Cardiac septum (tissue), 1 donor: ENCODE measurements at regions of chr3 and their contacts with region 1.

Region 1: DNA sequence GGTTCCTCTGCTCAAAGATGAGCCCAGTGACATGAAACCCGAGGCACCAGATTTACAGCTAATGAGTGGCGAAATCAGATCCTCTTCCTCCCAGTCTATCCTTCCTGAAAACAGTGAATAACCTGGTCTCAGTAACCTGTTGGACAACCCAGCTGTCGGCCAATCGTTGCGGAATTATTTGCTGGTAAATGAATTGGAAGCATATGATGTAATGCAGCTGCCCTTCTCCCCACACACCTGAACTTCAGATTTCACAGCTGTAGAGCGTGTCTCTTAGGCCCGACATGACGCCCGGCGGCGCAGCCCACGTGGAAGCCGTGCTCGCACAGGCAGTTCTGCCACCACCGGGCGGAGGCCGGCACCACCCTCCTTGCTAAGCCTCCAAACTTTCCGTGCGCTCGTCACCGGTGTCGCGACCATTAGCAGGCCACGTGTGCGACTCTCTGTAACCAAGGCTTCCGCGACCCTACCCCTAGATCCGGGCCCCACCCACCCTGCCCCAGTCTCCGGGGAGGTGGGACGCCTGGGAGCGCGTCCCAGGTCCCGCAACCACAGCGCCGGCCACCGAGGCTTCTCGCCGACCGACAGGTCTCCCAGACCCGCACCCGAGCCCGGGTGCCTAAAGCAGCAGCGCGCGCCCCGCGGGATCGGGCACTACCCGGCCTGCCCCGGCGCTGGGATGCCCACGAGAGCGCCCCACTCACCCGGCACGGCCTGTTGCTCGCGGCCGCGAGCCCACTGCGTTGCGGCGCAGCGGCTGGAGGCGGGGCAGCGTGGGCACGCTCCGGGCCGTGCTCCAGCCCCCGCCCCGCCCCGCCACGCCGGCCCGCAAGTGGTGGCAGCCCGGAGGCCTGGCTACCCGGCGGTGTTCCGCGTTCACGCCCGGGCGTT is at the start of gene RIOX2:
- DNase-seq: peak; percentile 84
- total RNA-seq, gene RIOX2: 14.2 TPM

Region 2: DNA sequence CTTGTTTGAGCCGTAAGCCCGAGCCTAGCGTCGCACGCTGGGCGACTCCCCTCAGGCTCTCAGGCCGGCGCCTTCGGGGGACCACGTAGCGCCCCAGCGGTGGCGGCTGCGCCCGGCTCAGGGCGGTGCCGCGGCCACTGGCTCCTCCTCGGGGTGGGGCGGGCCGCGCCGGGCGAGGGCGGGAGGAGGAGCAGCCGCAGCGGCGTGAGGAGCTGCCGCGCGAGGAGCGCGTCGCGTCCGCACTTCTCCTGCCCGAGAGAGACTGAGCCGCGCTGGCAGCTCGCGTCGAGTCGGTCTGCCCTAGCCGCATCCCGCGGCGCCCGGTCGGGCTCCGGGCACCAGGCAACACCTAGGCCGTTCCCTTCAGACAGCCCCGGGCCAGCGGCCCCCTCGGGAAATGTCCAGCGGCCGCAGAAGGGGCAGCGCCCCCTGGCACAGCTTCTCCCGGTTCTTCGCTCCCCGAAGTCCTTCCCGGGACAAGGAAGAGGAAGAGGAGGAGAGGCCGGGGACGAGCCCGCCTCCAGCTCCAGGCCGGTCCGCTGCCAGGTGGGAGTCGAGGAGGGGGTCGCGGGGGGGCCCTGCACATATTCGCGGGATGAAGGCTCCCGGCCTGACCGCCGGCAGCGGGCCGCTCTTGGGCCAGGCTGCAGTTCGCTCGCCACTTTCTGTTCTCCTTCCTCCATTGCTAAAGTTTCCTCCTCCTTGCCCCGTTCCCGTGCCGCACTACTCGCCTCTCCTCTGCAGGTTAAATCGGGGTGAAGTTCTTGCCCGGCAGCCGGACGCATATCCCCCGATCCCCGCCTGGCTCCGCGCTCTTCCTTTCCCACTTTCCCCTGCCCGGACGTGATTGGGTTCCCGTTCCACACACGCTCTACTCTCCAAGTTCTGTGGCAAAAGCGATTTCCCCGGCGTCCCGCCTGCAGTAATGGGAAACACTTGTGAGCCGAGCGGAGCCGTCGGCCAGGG is 149.8 kb before region 1 on chr3 and contains the start of gene CRYBG3:
- intact Hi-C with region 1: loop called (anchors 5 kb)
- DNase-seq: peak; percentile 93
- total RNA-seq, gene CRYBG3: 38.2 TPM

Region 3: GRCh38 chr3:97901313-97902248 is 70.3 kb before region 1 on chr3:
- intact Hi-C with region 1: loop called (anchors 5 kb)
- DNase-seq: no peak

Region 4: GRCh38 chr3:98022978-98023820 is 51.3 kb after region 1 on chr3:
- intact Hi-C with region 1: loop called (anchors 5 kb)
- DNase-seq: peak; percentile 89